Posterior vena cava (tissue), 2 donors: ENCODE measurements at regions of chr7 and their contacts with region 1.

Region 1: DNA sequence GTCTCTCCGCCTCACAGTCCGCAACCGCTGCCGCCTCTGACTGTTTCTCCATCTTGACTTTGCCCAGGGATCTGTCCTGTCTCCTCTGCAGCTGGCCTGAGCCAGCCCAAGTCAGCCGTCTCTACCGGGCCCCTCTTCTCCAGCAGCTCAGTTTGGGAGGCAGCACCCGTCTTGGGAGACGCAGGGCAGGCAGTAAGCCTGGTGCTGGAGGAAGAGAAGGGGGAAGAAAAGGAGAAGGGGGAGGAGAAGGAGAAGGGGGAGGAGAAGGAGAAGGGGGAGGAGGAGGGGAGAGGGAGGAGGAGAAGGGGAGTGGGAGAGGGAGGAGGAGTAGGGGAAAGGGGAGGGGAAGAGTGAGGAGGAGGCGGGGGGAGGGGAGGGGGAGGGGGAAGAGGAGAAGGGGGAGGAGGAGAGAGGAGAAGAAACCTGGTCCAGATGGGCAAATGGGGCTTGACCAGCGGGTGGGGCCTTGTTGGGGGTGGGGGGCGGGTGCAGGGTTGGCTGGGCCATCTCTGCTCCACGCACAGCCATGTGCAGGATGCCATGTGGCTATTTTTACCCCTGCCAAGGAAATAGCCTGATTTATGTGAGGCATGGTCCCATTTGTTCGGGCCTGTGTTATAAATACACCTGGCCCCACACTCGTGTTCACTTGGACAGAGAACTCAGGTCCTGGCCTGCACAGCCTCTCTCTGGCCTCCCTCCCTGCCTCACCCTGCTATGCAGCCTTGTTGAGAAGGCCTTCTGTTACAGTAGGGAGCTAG is 35.9 kb upstream of the FZD9 start:
- DNase-seq: no peak

Region 2: DNA sequence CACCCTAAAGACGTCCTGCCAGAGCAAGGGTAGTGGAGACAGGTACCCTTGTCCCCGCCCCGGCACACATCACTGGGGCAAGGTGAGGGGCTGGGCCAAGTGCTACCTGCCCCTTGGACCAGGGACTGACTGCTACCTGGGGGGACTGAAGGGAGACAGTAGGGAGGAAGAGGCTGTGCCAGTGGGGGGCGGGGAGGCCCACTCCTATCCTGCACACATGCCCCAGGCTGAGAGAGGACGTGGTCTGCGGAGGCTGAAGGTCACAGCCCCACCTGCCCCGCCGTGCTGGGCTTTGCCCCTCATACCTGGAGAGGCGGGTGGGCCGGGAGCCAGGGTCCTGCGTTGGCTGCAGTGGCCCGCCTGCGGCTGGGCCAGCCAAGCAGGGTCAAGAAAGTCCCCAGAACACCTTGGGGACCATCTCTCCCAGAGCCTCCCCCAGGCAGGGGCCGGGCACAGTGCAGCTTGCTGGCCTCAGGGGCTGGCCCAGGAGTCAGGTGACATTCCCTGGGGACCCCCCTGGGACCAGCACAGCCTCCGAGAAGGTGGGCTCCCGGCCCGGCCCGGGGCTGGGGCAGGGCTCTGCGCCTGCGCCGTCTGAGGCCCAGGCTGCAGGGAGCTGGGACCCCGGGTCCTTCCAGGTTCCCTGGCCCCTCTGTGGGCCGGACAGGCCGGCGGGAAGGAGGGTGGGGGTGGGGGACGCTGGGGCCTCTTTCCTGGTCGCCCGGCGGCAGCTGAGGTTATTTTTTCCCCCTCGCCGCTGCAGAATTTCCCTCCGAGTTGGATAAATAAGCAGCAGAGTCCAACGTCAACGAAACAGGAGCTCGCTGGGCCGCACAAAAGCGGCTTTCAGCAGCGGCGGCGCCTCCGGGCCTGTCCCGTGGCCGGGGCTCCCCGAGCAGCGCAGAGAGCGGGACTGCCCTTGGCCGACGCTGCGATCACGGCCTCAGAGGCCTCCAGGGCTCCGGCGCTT is 26.1 kb after region 1 on chr7:
- intact Hi-C with region 1: loop called in 1 of 2 experiments (anchors 1 kb)
- DNase-seq: no peak